ENCODE measurements at regions of chr3 and their contacts with region 1.

Region 1: DNA sequence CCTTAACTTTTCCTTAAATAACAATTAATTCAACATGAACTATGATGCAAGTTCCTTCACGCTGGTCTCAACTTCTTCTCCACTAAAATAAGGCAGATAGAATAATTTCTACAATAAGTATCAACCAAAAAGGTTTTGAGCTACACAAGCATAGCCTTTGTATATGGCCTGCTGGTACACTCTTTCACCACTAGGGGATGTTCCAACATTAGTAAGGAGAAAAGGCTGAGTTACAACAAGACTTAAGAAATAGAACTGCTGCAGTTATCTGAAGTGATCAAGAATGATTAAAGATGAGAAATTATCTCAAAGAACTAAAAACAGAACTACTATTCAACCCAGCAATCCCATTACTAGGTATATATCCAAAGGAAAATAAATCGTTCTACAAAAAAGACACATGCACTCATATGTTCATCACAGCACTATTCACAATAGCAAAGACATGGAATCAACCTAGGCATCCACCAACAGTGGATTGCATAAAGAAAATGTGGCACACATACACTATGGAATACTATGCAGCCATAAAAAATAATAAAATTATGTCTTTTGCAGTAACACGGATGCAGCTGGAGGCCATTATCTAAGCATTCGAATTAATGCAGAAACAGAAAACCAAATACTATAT is 14.4 kb downstream of the ATP13A3 start:
- DNase-seq: no peak
- ATAC-seq: peak; percentile 77

Region 2: DNA sequence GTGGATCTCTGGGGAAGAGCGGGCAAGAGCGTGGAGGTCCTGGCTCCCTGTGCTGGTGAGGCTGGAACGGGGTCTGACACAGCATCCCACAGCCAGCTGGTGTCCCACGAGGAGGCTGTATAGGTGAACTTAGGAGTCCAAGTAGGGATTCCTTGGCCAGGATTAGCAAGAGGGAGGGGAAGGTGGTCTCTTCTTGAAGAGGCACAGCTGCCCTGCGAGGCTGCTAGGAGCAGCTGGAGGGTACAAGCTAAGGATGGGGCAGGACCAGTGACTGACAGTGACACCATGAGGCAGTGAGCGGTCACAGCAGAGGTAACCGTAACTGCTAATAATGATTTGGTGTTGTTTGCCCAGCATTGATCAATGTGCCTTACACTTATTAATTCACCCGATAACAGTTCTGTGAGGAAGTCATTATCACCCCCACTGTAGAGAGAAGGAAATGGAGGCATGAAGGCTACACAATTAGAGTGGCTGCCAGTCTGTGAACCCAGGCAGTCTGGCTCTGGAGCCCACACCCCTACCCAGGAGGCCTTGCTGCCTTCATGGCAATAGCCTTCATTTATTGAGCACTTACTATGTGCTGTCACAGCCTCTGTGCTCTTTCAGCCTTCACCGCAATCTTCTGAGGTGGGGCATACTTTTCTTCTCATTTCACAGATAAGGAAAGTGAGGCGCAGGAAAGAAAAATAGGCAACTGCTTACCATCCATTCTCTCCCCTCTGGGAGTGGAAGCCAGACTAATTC is 101.5 kb after region 1 on chr3:
- intact Hi-C with region 1: loop called in 1 of 2 experiments (anchors 10 kb)
- DNase-seq: peak in 1 of 2 donors; percentile 48
- ATAC-seq: peak; percentile 88

Region 3: DNA sequence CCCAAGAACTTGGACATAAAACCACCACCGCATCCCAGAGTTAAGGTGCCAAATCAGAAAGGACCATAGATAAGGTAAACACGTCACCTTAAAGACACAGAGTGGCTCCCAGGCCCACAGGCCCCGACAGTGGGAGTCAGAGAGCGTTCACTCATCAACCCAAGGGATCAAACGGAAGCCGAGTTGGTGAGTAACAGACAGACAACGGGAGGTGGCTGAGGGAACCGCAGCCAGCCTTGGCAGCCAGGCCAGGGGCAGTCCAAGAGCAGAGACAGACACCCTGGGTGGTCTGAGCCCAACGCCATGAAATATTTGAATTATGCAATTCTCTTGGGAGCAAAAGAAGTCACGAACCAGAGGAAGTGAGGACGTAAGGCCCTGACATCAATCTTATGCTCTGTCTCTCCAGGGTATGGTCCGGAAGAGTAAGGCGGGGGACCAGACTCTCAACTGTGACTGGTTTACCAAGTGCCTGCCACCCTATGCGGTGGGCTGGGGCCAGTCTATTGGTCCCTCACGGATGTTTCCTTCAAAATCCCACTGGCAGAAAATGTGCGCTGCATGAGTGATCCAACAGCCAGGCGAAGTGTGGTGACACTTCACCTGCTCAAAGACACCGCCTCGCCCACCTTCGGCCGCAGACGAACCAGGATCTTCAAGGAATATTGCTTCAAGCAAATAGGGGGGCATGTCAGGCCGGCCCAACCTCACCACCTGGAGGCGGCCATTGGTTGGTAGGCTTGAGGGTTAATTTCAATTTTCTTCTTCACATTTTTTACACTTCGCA is 126.6 kb after region 1 on chr3:
- intact Hi-C with region 1: loop called in 1 of 2 experiments (anchors 5 kb)
- DNase-seq: no peak
- ATAC-seq: no peak

Measured in left colon (tissue), 2 donors.